ENCODE measurements at regions of chr1 and their contacts with region 1.

Region 1: DNA sequence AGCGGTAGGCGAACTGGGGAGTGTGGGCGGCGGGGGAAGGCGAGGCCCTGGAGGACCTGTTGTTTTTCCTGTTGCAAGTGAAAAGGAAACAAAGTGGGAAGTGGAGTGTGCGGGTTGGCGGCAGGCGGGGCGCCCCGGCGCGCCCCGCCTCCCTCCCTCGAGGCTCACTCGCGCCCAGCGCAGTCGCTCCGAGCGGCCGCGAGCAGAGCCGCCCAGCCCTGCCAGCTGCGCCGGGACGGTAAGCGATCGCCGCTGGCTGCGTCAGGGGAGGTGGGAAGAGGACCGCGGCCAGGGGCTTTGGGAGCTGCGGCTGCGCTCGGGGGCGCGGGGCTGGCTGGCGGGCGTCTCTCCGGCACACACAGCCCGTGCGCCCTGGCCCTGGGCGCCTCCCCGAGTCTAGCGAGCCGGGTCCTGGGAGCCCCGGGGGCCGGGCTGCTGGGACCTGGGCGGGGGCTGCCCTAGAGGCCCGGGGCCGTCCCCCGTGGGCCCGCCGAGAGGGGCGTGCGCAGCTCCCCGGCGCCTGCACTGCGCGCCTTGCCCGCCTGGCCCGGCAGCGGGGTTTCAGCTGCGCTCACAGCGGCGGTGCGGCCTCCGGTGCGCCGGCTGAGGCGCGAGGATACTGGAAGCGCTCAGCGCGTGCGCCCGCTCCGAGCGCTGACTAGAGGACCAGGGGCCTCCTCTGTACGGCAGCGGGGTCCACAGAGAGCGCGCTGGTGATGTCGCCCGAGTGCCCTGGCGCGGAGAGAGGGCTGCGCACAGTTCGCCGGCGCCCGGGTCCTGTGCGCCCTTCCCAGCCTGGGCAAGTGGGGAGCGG is at the start of gene PIK3CD:
- DNase-seq: peak; percentile 51 to 74
- ATAC-seq: peak; percentile 29 to 62 (median 52)
- H3K4me3 ChIP-seq: peak within 1 kb of the TSS; percentile 75
- H3K4me3 Mint-ChIP-seq: peak within 1 kb of the TSS; percentile 93
- H3K27ac ChIP-seq: peak within 1 kb of the TSS; percentile 70
- H3K27ac Mint-ChIP-seq: peak within 1 kb of the TSS; percentile 92 to 96
- H3K4me1 ChIP-seq: peaks cover 53% of the 10 kb centered on the region
- H3K4me1 Mint-ChIP-seq: peaks cover 42 to 50% of the 10 kb centered on the region in 2 donors
- H3K27me3 ChIP-seq: no peaks in the 10 kb centered on the region
- H3K27me3 Mint-ChIP-seq: no peaks in the 10 kb centered on the region
- CTCF ChIP-seq: no peak
- total RNA-seq, gene PIK3CD: 171 to 240 (median 198) TPM

Region 2: GRCh38 chr1:9689011-9689706 is 37.4 kb after region 1 on chr1:
- intact Hi-C with region 1: loop called (anchors 1 kb)
- DNase-seq: peak; percentile 83 to 84
- ATAC-seq: peak; percentile 67 to 87 (median 79)
- H3K4me3 ChIP-seq: peak overlapping the region; percentile 37
- H3K4me3 Mint-ChIP-seq: peak overlapping the region; percentile 83
- H3K27ac ChIP-seq: peak overlapping the region; percentile 22
- H3K27ac Mint-ChIP-seq: peak overlapping the region; percentile 95
- H3K4me1 ChIP-seq: peaks cover 77% of the 10 kb centered on the region
- H3K4me1 Mint-ChIP-seq: peaks cover 65 to 78% of the 10 kb centered on the region in 2 donors
- H3K27me3 ChIP-seq: no peaks in the 10 kb centered on the region
- H3K27me3 Mint-ChIP-seq: no peaks in the 10 kb centered on the region
- CTCF ChIP-seq: no peak

Region 3: DNA sequence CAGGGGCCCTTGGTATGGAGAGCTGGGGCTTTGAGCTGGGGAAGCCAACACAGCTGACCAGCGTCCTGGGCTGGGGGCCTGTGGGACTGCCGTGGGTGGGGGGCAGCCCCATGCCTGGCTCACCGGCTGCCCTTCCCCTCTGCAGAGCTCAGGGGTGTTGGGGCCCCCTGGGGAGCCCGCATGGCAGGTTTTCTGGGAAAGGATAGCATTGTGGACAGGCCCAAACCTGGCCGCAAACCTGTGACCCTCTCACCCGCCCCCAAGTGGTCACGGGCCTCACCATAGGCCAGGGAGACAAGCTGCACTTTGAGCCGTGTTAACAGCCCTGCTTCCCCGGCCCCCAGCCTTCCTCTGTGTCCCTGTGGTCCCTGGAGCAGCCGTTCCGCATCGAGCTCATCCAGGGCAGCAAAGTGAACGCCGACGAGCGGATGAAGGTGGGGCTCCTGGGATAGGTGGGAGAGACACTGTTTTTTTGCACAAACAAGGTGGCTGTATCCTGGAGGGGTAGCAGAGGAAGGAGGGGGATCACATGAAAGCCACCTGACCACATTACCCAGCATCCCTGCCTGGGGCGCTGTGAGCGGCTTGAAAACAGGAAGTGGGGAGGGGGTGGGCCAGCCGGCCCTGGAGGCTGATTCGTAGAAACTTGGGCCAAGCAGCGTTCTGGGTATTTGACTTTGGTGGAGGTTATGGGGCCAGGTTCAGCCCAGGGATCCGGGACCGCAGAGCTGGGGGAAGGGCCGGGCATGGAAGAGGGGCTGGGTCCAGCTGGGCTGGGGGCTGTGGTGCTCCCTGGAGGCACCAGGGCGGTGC is 65.6 kb after region 1 on chr1:
- intact Hi-C with region 1: loop called (anchors 1 kb)
- DNase-seq: peak; percentile 80 to 95
- ATAC-seq: peak; percentile 83 to 94 (median 91)
- H3K4me3 ChIP-seq: peak overlapping the region; percentile 38
- H3K4me3 Mint-ChIP-seq: peak overlapping the region; percentile 89
- H3K27ac ChIP-seq: peak overlapping the region; percentile 74
- H3K27ac Mint-ChIP-seq: peak overlapping the region; percentile 96 to 100
- H3K4me1 ChIP-seq: peaks cover 96% of the 10 kb centered on the region
- H3K4me1 Mint-ChIP-seq: peaks cover 32 to 44% of the 10 kb centered on the region in 2 donors
- H3K27me3 ChIP-seq: no peaks in the 10 kb centered on the region
- H3K27me3 Mint-ChIP-seq: no peaks in the 10 kb centered on the region
- CTCF ChIP-seq: no peak

Measured in natural killer cell (primary cell).